GM13976 (cell line): ENCODE measurements at regions of chr22 and their contacts with region 1.

Region 1: GRCh38 chr22:25777870-25778269 is 35.9 kb downstream of the MYO18B start:
- DNase-seq: peak; percentile 66
- CTCF ChIP-seq: peak; percentile 2

Region 2: DNA sequence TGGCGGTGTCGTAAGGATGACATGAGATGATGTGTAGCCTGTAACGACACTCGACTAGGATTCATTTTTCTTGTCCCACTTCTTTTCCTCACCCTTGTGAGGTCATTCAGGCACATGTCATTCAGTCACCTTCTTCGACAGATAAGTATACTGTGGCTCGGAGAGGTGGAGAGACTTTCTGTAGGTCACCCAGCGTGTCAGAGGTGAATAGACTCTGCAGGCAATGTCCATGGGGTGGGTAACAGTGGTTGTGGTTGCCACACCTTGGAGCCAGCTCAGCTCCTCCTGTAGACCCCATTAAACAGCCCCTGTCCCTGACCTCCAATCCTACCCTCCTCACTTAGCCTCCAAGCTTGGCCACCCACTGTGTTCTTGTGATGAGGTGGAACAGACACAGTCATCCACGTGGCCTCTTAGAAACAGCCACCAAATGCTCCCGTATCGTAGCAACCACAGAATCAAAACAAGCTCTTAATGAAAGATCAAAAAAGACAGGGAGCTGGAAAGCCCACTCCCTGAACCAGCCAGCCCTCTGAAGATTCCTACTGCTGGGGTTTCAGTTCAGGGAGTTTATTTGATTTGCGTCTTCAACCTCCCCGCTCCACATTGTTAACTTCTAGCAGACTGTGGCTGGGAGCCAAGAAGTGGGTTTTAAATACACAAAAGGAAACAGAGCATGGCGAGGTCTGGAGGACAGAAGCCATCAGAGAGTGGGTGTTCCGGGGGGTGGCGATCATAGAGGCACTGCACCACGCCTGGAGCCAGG is 302.4 kb before region 1 on chr22:
- in situ Hi-C with region 1: loop called (anchors 10 kb)
- DNase-seq: no peak
- CTCF ChIP-seq: no peak

Region 3: DNA sequence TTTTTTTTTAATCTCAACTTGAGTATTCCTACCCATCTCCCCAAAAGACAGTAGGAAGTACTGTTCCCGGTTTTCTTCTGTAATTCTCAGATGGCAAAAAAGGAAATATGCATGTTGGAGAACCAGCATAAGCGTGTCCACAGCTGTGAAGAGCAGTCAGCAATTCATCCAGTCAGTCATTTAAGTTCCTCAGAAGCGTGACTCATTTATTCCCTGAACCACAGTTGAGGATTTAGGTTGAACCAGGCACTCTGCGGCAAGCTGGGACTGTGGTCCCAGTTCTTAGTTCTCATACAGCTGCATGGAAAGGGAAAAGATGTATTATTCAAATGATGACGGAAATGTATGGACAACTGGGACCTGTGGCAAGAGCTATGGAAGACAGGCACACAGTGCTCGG is 96.9 kb before region 1 on chr22:
- in situ Hi-C with region 1: no loop called
- DNase-seq: no peak
- CTCF ChIP-seq: no peak

Region 4: GRCh38 chr22:26008587-26008986 is 230.7 kb after region 1 on chr22:
- in situ Hi-C with region 1: no loop called
- DNase-seq: no peak
- CTCF ChIP-seq: no peak

Region 5: DNA sequence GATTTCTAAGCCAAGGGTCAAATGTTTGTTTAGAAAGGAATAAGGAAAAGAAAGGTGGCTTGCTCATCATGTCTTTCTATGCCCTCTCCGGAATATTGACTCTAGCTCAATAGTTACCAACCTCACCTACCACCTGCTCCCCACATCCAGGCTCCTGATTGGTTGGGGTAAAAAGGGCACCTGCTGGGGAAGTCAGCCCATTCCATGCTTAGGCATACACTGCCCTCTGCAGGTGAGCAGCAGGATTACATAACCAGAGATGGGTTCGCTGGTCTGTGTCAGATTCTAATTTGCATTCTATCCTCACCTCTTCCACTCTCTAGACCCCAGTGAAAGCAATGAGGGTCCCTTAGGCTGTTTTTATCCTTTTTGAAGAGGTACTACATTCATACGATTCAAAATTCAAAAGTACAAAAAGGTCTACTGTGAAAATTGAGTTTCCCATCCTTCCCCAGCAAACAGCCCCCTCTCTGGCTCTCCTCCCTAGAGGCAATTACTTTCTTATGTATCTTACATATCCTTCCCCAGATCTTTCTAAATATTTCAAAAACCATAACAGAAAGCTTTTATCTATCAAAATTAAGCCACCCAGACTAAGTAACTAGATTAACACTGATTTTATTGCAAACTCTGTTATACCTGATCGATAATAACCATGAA is 553.2 kb after region 1 on chr22:
- in situ Hi-C with region 1: loop called (anchors 10 kb)
- DNase-seq: peak; percentile 75
- CTCF ChIP-seq: peak; percentile 80